CD4-positive, alpha-beta T cell (primary cell): ENCODE measurements at regions of chr22 and their contacts with region 1.

Region 1: DNA sequence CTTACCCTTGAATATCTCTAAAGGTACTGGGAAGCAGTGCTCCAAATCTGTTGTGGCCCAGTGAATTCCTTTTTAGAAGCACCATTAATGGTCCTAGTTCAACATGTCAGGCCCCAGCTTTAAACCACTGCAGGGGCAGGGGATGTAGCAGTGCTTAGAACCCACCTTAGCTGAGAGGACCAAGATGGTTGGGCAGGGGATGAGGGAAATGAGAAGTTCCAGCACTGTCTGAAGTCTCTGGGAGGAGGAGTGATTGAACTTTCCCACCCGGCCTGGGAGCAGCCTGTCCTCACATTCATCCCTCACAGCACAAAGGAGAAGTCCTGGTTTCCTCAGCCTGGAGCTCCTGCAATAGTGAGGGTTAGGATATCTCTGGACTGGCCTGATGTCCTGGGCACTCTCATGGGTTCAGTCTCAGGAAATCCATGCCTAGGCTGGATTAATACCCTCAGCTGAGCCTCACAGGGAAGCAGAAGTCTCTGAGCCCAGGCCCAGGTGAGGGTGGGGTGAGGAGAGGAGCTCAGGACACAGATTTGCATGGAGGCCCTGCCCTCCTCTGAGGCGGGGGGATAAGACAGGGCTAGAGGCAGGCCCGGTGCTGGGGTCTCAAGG is 28.6 kb upstream of the PRAME start:
- DNase-seq: no peak
- ATAC-seq: no peak
- H3K4me3 ChIP-seq: no peak overlapping the region
- H3K4me3 Mint-ChIP-seq: no peak overlapping the region
- H3K27ac ChIP-seq: no peak overlapping the region
- H3K27ac Mint-ChIP-seq: no peak overlapping the region
- H3K4me1 ChIP-seq: no peaks in the 10 kb centered on the region
- H3K4me1 Mint-ChIP-seq: no peaks in the 10 kb centered on the region
- H3K27me3 ChIP-seq: peaks cover 5 to 9% of the 10 kb centered on the region in 2 experiments
- H3K27me3 Mint-ChIP-seq: peaks cover 25% of the 10 kb centered on the region
- CTCF ChIP-seq: no peak

Region 2: DNA sequence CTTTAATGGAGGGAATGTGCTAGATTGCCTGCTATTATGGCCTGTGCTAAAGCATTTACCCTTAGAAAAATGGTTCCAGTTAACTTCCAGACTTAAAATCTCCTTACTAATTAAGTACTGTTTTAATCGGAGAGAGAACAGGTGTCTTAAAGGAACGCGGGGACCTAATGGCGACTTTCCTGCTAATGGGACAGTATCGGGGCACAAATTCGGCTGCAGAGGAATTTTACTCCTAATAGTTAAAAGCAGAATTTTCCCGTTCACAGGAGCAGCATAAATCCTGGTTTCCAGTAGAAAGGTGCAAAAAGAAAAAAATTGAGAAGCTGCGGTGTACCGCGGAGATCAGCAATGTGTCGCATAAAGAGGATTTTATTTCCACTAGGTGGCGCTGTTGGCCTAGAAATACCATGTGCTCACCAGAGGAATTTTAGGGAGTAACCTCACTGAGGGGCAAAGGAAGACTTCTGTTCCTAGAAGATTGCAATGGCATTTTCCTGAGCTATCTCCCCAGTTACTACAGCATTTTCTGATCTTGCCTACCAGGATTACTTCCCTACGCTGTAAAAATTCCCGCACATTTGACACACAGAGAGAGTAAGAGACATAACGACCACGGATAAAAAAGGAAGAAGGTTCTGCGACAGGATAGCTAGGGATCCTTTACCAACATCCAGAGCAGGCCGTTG is 123.7 kb before region 1 on chr22:
- CTCF ChIA-PET with region 1: no interaction called
- POLR2A ChIA-PET with region 1: no interaction called
- intact Hi-C with region 1: loop called in 1 of 2 experiments (anchors 10 kb)
- DNase-seq: peak in 13 of 14 experiments; percentile 3 to 78 (median 28)
- ATAC-seq: no peak
- H3K4me3 ChIP-seq: no peak overlapping the region
- H3K4me3 Mint-ChIP-seq: no peak overlapping the region
- H3K27ac ChIP-seq: no peak overlapping the region
- H3K27ac Mint-ChIP-seq: no peak overlapping the region
- H3K4me1 ChIP-seq: no peaks in the 10 kb centered on the region
- H3K4me1 Mint-ChIP-seq: no peaks in the 10 kb centered on the region
- H3K27me3 ChIP-seq: peaks cover 17 to 19% of the 10 kb centered on the region in 2 experiments
- H3K27me3 Mint-ChIP-seq: peaks cover 66% of the 10 kb centered on the region
- CTCF ChIP-seq: peak; percentile 88

Region 3: DNA sequence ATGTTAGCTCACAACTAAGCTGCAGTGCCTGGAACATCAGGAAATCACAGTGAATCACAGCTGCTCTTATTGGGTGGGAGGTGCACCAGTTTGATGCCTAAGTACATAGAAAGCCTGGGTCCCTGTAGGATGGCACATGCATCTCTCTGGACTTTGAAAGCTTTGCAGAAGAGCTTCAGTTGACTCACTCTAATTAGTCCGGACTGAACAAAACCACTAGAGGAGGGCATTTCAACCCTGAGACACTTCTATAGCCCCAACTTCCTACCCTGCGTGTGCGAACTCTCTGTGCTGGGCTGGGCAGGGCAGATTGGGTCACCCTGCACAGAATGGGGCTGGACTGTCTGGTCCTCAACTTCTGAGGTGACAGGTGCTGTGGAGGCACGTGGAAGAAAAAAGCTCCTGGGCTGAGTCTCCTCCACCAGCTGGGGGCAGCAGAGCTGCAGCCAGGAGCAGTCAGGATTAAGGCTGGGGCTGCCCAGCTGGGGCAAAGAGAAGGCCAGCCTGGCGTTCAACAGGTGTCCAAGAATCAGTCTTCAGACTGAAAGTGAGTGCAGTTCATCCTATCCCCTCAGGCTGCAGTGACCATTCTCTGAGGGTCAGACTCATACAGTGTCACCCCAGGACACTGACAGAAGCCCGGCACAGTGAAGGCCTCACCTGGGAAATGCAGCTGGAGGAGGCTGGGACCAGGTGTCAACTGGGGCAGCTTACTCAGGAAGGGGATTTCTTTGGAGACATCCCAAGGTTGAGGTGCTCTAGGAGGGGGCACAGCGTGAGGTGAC is 78.8 kb after region 1 on chr22:
- CTCF ChIA-PET with region 1: no interaction called
- POLR2A ChIA-PET with region 1: no interaction called
- intact Hi-C with region 1: no loop called
- DNase-seq: peak in 4 of 14 experiments; percentile 6 to 29 (median 20)
- ATAC-seq: no peak
- H3K4me3 ChIP-seq: no peak overlapping the region
- H3K4me3 Mint-ChIP-seq: no peak overlapping the region
- H3K27ac ChIP-seq: no peak overlapping the region
- H3K27ac Mint-ChIP-seq: no peak overlapping the region
- H3K4me1 ChIP-seq: no peaks in the 10 kb centered on the region
- H3K4me1 Mint-ChIP-seq: no peaks in the 10 kb centered on the region
- H3K27me3 ChIP-seq: no peaks in the 10 kb centered on the region
- H3K27me3 Mint-ChIP-seq: no peaks in the 10 kb centered on the region
- CTCF ChIP-seq: no peak

Region 4: DNA sequence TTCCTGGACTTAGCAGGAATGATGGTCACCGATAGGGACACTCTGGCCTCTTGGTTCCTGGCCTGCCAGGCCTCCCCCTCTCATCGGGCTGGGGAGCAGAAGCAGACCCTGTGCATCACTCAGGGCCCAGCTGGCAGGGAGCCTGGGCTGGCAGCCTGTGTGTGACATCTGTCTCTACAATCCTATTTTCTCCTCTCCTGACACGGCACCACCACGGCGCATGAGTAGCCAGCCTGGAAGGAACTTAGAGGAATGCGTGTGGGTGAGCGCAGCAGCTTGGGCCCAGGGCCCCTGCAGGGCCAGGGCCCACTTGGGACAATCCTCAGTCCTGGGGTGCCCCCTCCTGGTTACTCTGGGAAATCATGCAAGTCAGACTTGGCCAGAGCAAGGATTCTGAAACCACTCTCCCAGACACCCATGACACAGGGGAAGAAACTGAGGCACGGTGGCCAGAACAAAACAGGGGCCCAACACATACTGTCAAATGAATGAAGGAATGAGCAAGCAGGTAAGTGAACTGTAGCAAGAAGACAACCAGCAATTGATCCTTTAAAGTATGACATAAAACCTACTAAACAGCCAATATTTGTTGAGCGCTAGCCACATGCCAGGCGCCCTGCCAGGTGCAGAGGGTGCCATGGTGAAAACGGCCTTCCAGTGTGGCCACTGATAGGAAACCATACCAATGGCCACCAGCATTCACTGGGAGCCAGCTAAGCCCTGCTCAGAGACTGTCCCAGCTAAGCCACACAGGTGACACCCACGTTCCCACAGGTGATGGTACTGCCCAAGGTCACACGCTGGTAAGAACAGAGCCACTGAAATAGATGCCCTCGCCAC is 540.8 kb after region 1 on chr22:
- CTCF ChIA-PET with region 1: no interaction called
- POLR2A ChIA-PET with region 1: no interaction called
- intact Hi-C with region 1: loop called in 1 of 2 experiments (anchors 1 kb)
- DNase-seq: peak; percentile 59 to 86 (median 70)
- ATAC-seq: peak; percentile 89
- H3K4me3 ChIP-seq: no peak overlapping the region
- H3K4me3 Mint-ChIP-seq: no peak overlapping the region
- H3K27ac ChIP-seq: no peak overlapping the region
- H3K27ac Mint-ChIP-seq: no peak overlapping the region
- H3K4me1 ChIP-seq: peaks cover 7% of the 10 kb centered on the region
- H3K4me1 Mint-ChIP-seq: peaks cover 5% of the 10 kb centered on the region
- H3K27me3 ChIP-seq: no peaks in the 10 kb centered on the region
- H3K27me3 Mint-ChIP-seq: no peaks in the 10 kb centered on the region
- CTCF ChIP-seq: peak; percentile 82